ENCODE measurements at regions of chr20 and their contacts with region 1.

Region 1: DNA sequence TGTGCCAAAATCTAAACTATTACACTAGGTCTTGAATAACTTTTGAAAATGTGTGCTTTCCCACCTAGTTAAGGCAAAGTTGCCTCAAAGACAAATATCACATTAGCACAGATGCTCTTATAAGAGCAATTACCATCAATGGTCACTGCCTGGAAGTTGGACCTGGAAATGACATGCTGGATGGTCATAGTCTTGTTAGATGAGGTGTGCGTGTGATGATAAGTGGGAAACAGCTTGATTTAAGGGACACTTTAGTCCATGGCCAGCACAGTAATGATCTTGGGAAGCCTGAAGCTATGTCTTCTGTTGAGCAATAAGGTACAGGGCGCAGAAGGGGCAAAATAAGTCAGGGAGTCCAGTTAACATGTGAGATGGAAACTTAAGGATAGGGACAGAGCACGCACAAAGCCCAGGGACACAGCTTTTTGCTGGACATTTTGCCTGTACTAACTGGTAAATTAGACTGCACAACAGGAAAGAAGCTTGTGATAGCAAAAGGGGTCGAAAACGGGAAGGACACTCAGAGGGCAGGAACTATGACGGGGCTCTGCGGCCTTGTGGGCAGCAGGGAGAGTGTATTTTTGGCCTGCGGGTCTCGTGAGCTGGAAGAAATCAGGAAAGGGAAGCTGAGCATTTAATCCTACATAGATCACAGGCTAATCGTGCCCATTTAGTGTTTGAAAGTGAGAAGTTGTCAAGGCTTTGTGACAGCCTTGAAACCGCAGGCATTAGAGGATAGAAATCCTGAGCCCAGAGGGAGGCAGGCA is 66.7 kb upstream of the BMP2 start:
- DNase-seq: peak; percentile 90
- H3K4me3 ChIP-seq: no peak overlapping the region
- H3K27ac ChIP-seq: peak overlapping the region; percentile 45
- H3K4me1 ChIP-seq: peaks cover 68% of the 10 kb centered on the region
- H3K27me3 ChIP-seq: no peaks in the 10 kb centered on the region
- CTCF ChIP-seq: no peak
- POLR2A ChIP-seq: no peak

Region 2: DNA sequence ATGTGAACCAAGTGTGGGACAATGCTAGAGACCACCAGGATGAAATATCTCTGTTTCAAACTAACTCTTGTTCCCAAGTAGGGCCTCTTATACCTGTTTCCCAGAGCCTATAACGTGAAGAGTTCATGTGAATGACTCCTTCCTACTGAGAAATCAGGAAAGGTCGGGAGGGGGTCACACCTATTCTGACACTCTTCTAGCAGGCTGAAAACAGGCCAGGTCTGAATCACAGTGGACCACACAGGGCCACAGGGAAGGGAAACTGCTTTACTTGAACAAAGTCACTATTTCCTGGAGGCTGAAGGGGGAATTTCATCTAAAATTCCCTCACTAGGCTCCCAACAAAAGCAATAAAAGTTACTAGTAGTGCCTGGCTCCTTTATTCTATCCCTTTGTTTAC is 21.7 kb before region 1 on chr20:
- CTCF ChIA-PET with region 1: interaction called, 9 read pairs
- POLR2A ChIA-PET with region 1: no interaction called
- dilution Hi-C with region 1: no loop called
- intact Hi-C with region 1: loop called (anchors 2 kb)
- DNase-seq: peak; percentile 46
- H3K4me3 ChIP-seq: no peak overlapping the region
- H3K27ac ChIP-seq: no peak overlapping the region
- H3K4me1 ChIP-seq: peaks cover 17% of the 10 kb centered on the region
- H3K27me3 ChIP-seq: no peaks in the 10 kb centered on the region
- CTCF ChIP-seq: no peak
- POLR2A ChIP-seq: no peak

Region 3: GRCh38 chr20:6756693-6757595 is 56.2 kb after region 1 on chr20:
- CTCF ChIA-PET with region 1: no interaction called
- POLR2A ChIA-PET with region 1: no interaction called
- dilution Hi-C with region 1: no loop called
- intact Hi-C with region 1: no loop called
- DNase-seq: peak; percentile 61
- H3K4me3 ChIP-seq: no peak overlapping the region
- H3K27ac ChIP-seq: no peak overlapping the region
- H3K4me1 ChIP-seq: no peaks in the 10 kb centered on the region
- H3K27me3 ChIP-seq: no peaks in the 10 kb centered on the region
- CTCF ChIP-seq: no peak
- POLR2A ChIP-seq: no peak